GM12878 (cell line): ENCODE measurements at regions of chr17 and their contacts with region 1.

Region 1: DNA sequence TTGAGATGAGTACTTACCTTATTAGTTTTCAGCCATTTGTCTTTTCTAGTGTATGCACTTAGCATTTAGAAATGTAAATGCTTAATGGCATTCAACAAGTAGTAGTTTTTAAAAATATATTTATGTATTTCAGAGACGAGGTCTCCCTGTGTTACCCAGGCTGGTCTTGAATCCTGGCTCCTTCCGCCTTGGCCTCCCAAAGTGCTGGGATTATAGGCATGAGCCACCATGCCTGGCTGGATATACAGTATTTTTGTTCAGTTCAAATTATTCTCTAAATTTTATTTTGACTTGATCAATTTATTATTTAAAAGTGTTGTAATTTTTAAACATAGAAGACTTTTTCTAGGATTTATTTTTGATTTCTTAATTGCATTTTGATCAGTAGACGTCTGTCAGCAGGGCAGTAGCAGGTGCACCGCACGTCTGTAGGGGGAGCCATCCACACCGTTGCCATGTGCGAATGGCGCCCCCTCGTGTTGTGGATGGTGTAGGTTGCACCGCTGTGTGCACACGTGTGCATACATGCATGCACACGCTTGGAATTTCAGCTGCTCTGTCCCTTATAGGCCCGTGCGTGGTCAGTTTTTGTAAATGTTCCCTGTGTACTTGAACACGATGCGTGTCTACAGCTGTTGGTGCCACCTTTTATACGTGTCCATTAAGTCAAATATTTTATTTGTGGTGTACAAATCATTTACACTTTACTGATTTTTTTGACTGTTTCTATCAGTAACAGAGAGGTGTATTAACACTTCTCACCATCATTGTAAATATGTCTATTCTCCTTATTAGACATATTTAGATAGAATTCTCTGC is 30.6 kb downstream of the RPTOR start:
- DNase-seq: peak; percentile 65
- ATAC-seq: peak; percentile 100
- H3K4me3 ChIP-seq: no peak overlapping the region
- H3K27ac ChIP-seq: no peak overlapping the region
- H3K4me1 ChIP-seq: no peaks in the 10 kb centered on the region
- H3K27me3 ChIP-seq: no peaks in the 10 kb centered on the region
- CTCF ChIP-seq: peak; percentile 100; a peak in 5 of 6 replicates
- EP300 ChIP-seq: no peak
- POLR2A ChIP-seq: no peak
- RAD21 ChIP-seq: peak; percentile 87

Region 2: GRCh38 chr17:80454557-80455335 is 120.5 kb before region 1 on chr17:
- CTCF ChIA-PET with region 1: interaction called, 4 read pairs
- POLR2A ChIA-PET with region 1: interaction called, 3 read pairs
- RAD21 ChIA-PET with region 1: no interaction called
- SMC1A ChIA-PET with region 1: interaction called, 3 read pairs
- in situ Hi-C with region 1: no loop called
- intact Hi-C with region 1: loop called (anchors 10 kb)
- DNase-seq: peak; percentile 84
- ATAC-seq: peak; percentile 96
- H3K4me3 ChIP-seq: peak overlapping the region; percentile 96
- H3K27ac ChIP-seq: peak overlapping the region; percentile 89
- H3K4me1 ChIP-seq: peaks cover 8% of the 10 kb centered on the region
- H3K27me3 ChIP-seq: peaks cover 0 to 3% of the 10 kb centered on the region in 2 experiments; a peak in 1 of 4 replicates
- CTCF ChIP-seq: no peak
- EP300 ChIP-seq: 0 out of 4 replicates have a peak, but pooled peaks of 1 of the 2 experiments have one; percentile 8
- POLR2A ChIP-seq: peak; percentile 89
- RAD21 ChIP-seq: no peak

Region 3: DNA sequence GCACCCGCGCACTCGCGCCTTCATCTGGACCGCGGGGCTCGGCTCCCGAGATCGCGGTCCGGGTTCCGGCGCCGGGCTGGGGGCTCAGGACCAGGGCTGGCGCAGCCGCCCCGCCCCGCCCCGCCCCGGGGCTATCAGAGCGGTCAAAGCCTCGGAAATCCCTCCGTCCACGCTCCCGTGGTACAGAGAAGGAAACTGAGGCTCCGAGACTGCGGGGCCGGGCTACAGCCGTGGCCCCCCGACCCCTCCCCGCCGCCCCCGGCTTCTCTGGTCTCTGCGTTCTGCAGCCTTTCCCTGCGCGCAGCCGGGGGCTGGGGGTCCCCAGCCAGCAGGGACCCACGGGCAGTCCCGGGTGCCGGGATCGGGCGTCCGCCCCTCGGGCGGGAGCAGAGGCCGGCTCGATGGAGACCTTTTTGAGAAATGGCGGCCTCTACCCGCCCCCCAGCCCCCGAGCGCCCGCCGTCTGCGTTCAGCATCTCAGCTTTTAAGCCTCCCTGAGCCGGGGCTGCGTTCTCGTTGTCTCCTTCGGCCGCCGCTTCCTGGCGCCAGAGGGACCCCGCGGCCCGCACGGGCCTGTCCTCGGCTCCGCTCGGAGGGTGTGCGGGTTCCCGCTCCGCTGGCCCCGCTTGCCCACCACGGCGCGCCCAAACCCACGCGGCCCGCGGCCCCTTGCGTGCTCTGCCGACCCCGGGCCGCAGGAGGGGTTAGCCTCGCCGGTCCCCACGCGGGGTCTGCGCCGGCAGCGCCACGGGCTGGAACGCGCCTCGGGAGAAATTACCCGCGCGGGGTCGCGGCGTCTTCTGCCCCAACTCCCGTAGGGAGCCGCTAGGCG is 97.4 kb before region 1 on chr17:
- CTCF ChIA-PET with region 1: interaction called, 3 read pairs
- POLR2A ChIA-PET with region 1: no interaction called
- RAD21 ChIA-PET with region 1: interaction called, 3 read pairs
- SMC1A ChIA-PET with region 1: no interaction called
- in situ Hi-C with region 1: no loop called
- intact Hi-C with region 1: loop called (anchors 5 kb)
- DNase-seq: no peak
- ATAC-seq: peak; percentile 52; the same call in 2 of the 3 replicates
- H3K4me3 ChIP-seq: no peak overlapping the region
- H3K27ac ChIP-seq: no peak overlapping the region
- H3K4me1 ChIP-seq: no peaks in the 10 kb centered on the region
- H3K27me3 ChIP-seq: peaks cover 7 to 22% of the 10 kb centered on the region in 2 experiments
- CTCF ChIP-seq: peak in 2 of 3 experiments; percentile 14 to 20; a peak in 1 of 6 replicates
- EP300 ChIP-seq: no peak
- POLR2A ChIP-seq: no peak
- RAD21 ChIP-seq: no peak

Region 4: DNA sequence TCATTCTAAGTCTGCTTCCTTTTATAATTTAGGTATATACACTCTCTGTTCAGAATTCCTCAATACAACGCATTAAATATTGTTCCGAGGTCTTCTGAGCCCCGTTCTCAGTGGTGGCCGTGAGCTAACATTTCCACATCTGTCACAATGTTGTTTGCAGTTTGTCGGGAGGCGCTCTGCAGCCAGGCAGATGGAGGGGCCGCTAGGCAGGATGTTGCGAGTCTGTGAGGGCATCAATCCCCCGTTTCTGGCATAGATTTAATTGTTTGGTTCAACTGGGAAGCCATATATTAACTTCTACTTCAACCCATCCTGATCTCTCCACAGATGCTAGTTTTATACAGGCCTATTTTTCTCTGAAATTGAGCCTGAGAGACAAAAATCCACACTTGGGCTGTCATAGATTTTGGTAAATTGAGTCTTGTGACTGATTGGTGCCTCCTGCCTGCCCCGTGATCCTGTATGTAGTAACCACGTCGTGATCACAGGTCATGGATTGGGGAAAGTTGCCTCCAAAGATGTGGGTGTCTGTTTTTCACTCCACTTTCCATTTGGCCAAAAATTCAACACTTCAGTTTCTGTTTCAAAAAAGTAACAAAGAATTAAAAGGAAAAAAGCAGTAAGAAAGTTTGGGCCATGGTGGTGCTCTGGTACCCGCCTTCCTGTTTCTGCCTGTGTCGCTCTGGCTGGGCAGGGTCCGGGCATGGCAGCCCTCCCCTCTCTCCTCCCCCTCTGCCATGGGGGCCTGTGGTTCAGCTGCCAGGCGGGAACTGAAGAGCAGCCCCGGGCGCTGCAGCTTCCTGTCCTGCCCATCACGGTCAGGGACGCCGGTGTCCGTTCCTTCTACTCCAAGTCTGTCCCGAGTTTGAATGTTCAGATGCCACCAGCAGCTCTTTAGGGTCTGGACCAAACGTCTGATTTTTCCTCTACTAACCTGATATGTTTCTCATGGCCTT is 10.9 kb after region 1 on chr17:
- CTCF ChIA-PET with region 1: interaction called, 11 read pairs
- POLR2A ChIA-PET with region 1: no interaction called
- RAD21 ChIA-PET with region 1: no interaction called
- SMC1A ChIA-PET with region 1: interaction called, 6 read pairs
- in situ Hi-C with region 1: no loop called
- intact Hi-C with region 1: no loop called
- DNase-seq: no peak
- ATAC-seq: no peak
- H3K4me3 ChIP-seq: no peak overlapping the region
- H3K27ac ChIP-seq: no peak overlapping the region
- H3K4me1 ChIP-seq: no peaks in the 10 kb centered on the region; the same call in 1 of the 2 replicates
- H3K27me3 ChIP-seq: no peaks in the 10 kb centered on the region
- CTCF ChIP-seq: no peak
- EP300 ChIP-seq: no peak
- POLR2A ChIP-seq: no peak
- RAD21 ChIP-seq: no peak

Region 5: GRCh38 chr17:80652756-80653330 is 77.6 kb after region 1 on chr17:
- CTCF ChIA-PET with region 1: no interaction called
- POLR2A ChIA-PET with region 1: no interaction called
- RAD21 ChIA-PET with region 1: no interaction called
- SMC1A ChIA-PET with region 1: no interaction called
- in situ Hi-C with region 1: no loop called
- intact Hi-C with region 1: no loop called
- DNase-seq: no peak
- ATAC-seq: no peak
- H3K4me3 ChIP-seq: no peak overlapping the region
- H3K27ac ChIP-seq: no peak overlapping the region
- H3K4me1 ChIP-seq: peaks cover 4% of the 10 kb centered on the region
- H3K27me3 ChIP-seq: no peaks in the 10 kb centered on the region
- CTCF ChIP-seq: no peak
- EP300 ChIP-seq: no peak
- POLR2A ChIP-seq: no peak
- RAD21 ChIP-seq: no peak

Region 6: DNA sequence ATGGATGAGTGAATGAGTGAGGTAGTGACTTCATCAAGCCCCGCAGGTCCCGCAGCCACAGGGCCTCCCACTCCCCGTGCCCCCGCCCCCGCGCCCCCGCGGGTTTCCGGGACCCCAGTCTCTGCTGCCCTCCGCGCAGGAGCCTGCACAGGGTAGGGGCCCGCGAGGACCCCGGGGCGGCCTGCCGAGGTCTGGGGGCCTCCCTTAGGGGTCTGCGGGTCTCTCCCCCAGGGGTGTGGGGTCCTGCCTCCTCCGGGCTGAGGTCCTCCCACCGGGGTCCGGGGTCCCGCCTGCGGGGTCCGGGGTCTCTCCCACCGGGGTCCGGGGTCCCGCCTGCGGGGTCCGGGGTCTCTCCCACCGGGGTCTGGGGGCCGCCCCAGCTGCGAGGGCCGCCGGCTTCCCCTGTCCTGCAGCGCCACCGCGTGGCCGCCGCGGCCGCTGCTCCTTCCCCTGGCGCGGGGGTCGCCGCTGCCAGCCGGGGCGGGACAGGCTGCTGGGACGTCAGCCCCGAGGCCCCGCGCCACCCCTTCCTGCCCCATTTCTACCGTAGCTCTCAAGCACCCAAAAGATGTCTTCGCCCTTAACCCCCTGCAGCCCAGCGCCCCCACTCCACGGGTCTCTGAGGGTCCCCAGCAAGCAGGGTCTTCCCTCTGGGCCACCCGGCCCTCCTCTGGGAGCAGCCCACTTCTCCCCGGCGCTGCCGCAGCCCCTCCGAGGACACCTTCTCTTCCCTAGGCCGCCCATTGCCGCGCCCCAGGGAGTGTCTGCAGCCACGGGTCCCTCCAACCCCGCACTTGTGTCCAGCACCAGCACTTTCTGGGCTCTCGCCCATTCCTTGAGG is 406.0 kb after region 1 on chr17:
- CTCF ChIA-PET with region 1: no interaction called
- POLR2A ChIA-PET with region 1: no interaction called
- RAD21 ChIA-PET with region 1: no interaction called
- SMC1A ChIA-PET with region 1: no interaction called
- in situ Hi-C with region 1: no loop called
- intact Hi-C with region 1: loop called (anchors 5 kb)
- DNase-seq: no peak
- ATAC-seq: peak; percentile 90
- H3K4me3 ChIP-seq: no peak overlapping the region
- H3K27ac ChIP-seq: no peak overlapping the region
- H3K4me1 ChIP-seq: no peaks in the 10 kb centered on the region
- H3K27me3 ChIP-seq: peaks cover 0 to 3% of the 10 kb centered on the region in 2 experiments; a peak in 1 of 4 replicates
- CTCF ChIP-seq: peak; percentile 49 to 60 (median 55); a peak in 5 of 6 replicates
- EP300 ChIP-seq: no peak
- POLR2A ChIP-seq: no peak
- RAD21 ChIP-seq: peak; percentile 72